Activated B cell treated with CpG ODN at 0.5 μM for 24 hours (primary cell): ENCODE measurements at regions of chr9 and their contacts with region 1.

Region 1: GRCh38 chr9:97982683-97983588 is at the start of gene ANP32B:
- DNase-seq: peak; percentile 95
- ATAC-seq: peak; percentile 80
- H3K4me3 Mint-ChIP-seq: peak within 1 kb of the TSS; percentile 86
- H3K27ac Mint-ChIP-seq: peak within 1 kb of the TSS; percentile 92
- H3K4me1 Mint-ChIP-seq: peaks cover 38% of the 10 kb centered on the region
- H3K27me3 Mint-ChIP-seq: no peaks in the 10 kb centered on the region
- CTCF ChIP-seq: no peak
- total RNA-seq, gene ANP32B: 162 and 173 TPM in 2 replicates

Region 2: GRCh38 chr9:97696803-97697601 is 285.9 kb before region 1 on chr9 and contains the start of gene XPA:
- CTCF ChIA-PET with region 1: interaction called, 3 read pairs
- POLR2A ChIA-PET with region 1: interaction called, 26 read pairs
- intact Hi-C with region 1: loop called (anchors 1 kb)
- DNase-seq: peak; percentile 96
- ATAC-seq: peak; percentile 93
- H3K4me3 Mint-ChIP-seq: peak within 1 kb of the TSS; percentile 90
- H3K27ac Mint-ChIP-seq: peak within 1 kb of the TSS; percentile 94
- H3K4me1 Mint-ChIP-seq: peaks cover 60% of the 10 kb centered on the region
- H3K27me3 Mint-ChIP-seq: peaks cover 5% of the 10 kb centered on the region
- CTCF ChIP-seq: no peak
- total RNA-seq, gene XPA: 14.4 and 18.1 TPM in 2 replicates

Region 3: GRCh38 chr9:97993000-97993399 is 10.1 kb after region 1 on chr9:
- CTCF ChIA-PET with region 1: interaction called, 4 read pairs
- POLR2A ChIA-PET with region 1: interaction called, 4 read pairs
- intact Hi-C with region 1: loop called (anchors 1 kb)
- DNase-seq: no peak
- ATAC-seq: peak; percentile 73
- H3K4me3 Mint-ChIP-seq: peak overlapping the region; percentile 24
- H3K27ac Mint-ChIP-seq: peak overlapping the region; percentile 63
- H3K4me1 Mint-ChIP-seq: peaks cover 70% of the 10 kb centered on the region
- H3K27me3 Mint-ChIP-seq: no peaks in the 10 kb centered on the region
- CTCF ChIP-seq: no peak

Region 4: GRCh38 chr9:98034593-98035546 is 51.9 kb after region 1 on chr9:
- CTCF ChIA-PET with region 1: interaction called, 8 read pairs
- POLR2A ChIA-PET with region 1: interaction called, 5 read pairs
- intact Hi-C with region 1: loop called (anchors 1 kb)
- DNase-seq: peak; percentile 73
- ATAC-seq: peak; percentile 89
- H3K4me3 Mint-ChIP-seq: peak overlapping the region; percentile 1
- H3K27ac Mint-ChIP-seq: peak overlapping the region; percentile 36
- H3K4me1 Mint-ChIP-seq: peaks cover 47% of the 10 kb centered on the region
- H3K27me3 Mint-ChIP-seq: no peaks in the 10 kb centered on the region
- CTCF ChIP-seq: no peak

Region 5: DNA sequence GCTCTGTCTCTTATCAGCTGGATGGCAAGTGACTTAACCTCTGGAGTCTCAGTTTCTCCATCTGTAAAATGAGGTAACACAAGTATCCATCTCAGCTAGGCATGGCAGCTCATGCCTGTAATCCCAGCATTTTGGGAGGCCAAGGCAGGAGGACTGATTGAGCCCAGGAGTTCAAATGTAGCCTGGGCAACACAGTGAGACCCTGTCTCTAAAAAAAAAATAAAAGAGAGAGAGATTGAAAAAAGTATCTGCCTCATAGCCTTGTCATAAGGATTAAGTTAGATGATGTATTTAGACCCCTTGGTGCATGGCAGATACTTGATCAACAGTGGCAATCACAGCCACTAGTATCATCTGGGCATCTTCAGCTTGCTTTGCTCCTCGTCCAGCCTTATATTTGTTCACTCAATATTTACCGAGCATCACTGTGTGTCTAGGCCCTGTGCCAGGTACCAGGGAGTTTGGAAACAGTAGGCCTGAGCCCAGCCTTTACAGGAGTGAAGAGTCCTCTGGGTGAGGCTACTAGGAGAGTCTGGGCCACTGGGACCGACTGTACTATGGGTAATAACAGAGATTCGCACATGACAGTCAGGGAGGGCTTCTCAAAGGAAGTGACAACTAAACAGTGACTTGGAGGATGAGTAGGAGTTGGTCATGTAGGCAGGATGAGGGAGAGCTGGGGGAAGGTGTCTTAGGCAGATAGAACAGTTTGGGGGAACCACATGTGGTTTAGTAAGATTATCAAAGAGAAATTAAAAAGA is 175.3 kb after region 1 on chr9:
- CTCF ChIA-PET with region 1: no interaction called
- POLR2A ChIA-PET with region 1: no interaction called
- intact Hi-C with region 1: no loop called
- DNase-seq: no peak
- ATAC-seq: no peak
- H3K4me3 Mint-ChIP-seq: no peak overlapping the region
- H3K27ac Mint-ChIP-seq: no peak overlapping the region
- H3K4me1 Mint-ChIP-seq: no peaks in the 10 kb centered on the region
- H3K27me3 Mint-ChIP-seq: no peaks in the 10 kb centered on the region
- CTCF ChIP-seq: no peak

Region 6: GRCh38 chr9:98255578-98256296 is 272.8 kb after region 1 on chr9 and contains the start of gene TBC1D2:
- CTCF ChIA-PET with region 1: interaction called, 5 read pairs
- POLR2A ChIA-PET with region 1: interaction called, 33 read pairs
- intact Hi-C with region 1: loop called (anchors 1 kb)
- DNase-seq: peak; percentile 98
- ATAC-seq: peak; percentile 90
- H3K4me3 Mint-ChIP-seq: peak within 1 kb of the TSS; percentile 98
- H3K27ac Mint-ChIP-seq: peak within 1 kb of the TSS; percentile 99
- H3K4me1 Mint-ChIP-seq: peaks cover 13% of the 10 kb centered on the region
- H3K27me3 Mint-ChIP-seq: no peaks in the 10 kb centered on the region
- CTCF ChIP-seq: no peak
- total RNA-seq, gene TBC1D2: 2.1 and 2.7 TPM in 2 replicates